ENCODE measurements at regions of chr6 and their contacts with region 1.

Region 1: DNA sequence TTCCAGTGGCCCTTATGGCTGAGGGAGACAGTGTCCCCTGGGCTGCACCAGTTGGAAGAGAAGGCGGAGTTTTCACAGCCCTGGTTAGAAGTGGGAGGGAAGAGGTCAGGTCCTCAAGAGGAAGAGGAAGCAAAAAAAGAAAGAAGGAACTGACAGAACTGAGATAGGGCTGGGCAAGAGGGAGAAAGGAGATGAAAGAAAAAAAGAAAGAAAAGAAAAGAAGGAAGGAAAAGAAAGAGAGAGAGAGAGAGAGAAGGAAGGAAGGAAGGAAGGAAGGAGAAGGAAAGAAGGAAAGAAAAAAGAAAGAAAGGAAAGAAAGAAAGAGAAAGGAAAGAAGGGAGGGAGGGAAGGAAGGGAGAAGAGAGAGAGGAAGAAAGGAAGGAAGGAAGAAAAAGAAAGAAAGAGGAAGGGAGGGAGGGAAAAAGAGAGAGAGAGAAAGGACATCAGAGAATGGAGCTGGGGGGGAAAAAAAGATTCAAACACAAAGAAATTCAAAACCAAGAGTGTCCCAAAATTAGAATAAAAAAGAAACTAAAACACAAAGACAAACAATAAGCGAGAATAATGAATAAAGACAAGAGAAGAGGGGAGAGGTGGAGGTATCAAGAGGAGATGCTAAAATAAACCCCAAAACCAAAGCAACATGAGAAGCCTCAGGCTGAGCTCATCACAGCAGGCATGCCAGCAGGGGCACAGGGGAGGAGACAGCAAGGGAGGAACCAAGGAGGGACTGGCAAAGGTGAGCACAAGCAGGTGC is 5.3 kb upstream of the FUCA2 start:
- DNase-seq: no peak
- ATAC-seq: no peak
- H3K4me3 ChIP-seq: no peak overlapping the region
- H3K27ac ChIP-seq: peak overlapping the region in 4 of 12 donors; percentile 63 to 82 (median 76)
- H3K4me1 ChIP-seq: peaks cover 0 to 28% (median 12%) of the 10 kb centered on the region in 12 donors
- H3K27me3 ChIP-seq: no peaks in the 10 kb centered on the region
- CTCF ChIP-seq: no peak
- POLR2A ChIP-seq: no peak

Region 2: DNA sequence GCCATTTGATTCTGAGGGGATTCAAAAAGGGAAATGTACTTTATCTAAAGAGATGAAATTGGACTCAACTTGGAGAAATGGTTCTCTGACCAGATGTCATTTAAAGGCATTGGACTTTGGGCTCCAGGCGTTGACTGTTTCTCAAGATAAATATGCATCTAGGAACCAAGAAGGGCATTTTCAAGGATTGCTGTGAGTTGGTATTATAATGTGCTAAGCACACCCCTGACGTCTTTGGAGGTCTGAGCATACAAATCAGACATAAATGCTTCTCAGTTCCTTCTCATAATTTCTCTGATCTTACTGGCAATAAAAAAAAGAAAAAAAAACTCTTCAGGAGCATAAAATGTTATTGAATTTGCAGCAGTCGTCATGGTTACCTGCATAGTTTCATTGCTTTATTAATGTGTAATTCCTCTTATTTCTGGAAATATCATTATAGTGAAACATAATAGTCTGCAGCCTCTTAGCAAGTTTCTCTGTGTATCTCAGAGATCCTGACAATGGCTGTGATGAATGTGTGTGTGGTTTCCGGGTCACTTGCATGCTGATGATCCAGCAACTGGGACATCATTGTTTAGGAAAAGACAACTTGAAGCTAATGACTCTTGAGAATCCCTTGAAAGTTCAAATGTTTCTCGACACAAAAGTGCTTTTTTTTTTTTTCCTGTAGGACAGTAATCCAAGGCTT is 320.2 kb before region 1 on chr6:
- intact Hi-C with region 1: no loop called
- DNase-seq: no peak
- ATAC-seq: no peak
- H3K4me3 ChIP-seq: no peak overlapping the region
- H3K27ac ChIP-seq: no peak overlapping the region
- H3K4me1 ChIP-seq: peaks cover 0 to 37% (median 4%) of the 10 kb centered on the region in 12 donors
- H3K27me3 ChIP-seq: no peaks in the 10 kb centered on the region
- CTCF ChIP-seq: no peak
- POLR2A ChIP-seq: no peak

Region 3: GRCh38 chr6:143536865-143537691 is 20.2 kb after region 1 on chr6:
- intact Hi-C with region 1: loop called in 1 of 10 experiments (anchors 2 kb)
- DNase-seq: peak; percentile 44 to 85 (median 69)
- ATAC-seq: peak; percentile 58 to 87 (median 78)
- H3K4me3 ChIP-seq: peak overlapping the region; percentile 53 to 71 (median 64)
- H3K27ac ChIP-seq: peak overlapping the region in 11 of 12 donors; percentile 42 to 82 (median 67)
- H3K4me1 ChIP-seq: peaks cover 0 to 22% (median 6%) of the 10 kb centered on the region in 12 donors
- H3K27me3 ChIP-seq: no peaks in the 10 kb centered on the region
- CTCF ChIP-seq: peak in 11 of 12 donors; percentile 17 to 68 (median 35)
- POLR2A ChIP-seq: no peak